ENCODE measurements at regions of chr7 and their contacts with region 1.

Region 1: GRCh38 chr7:81499262-81500116 is 270.4 kb downstream of the HGF start:
- ATAC-seq: peak; percentile 47 to 88 (median 72)
- H3K4me3 ChIP-seq: no peak overlapping the region
- H3K27ac ChIP-seq: no peak overlapping the region
- H3K4me1 ChIP-seq: peaks cover 0 to 2% of the 10 kb centered on the region in 2 donors

Region 2: GRCh38 chr7:81715984-81716588 is 216.6 kb after region 1 on chr7:
- in situ Hi-C with region 1: loop called in 2 of 9 experiments (anchors 25 kb)
- ATAC-seq: peak in 5 of 8 experiments; percentile 36 to 79 (median 67)
- H3K4me3 ChIP-seq: no peak overlapping the region
- H3K27ac ChIP-seq: no peak overlapping the region
- H3K4me1 ChIP-seq: no peaks in the 10 kb centered on the region

Region 3: DNA sequence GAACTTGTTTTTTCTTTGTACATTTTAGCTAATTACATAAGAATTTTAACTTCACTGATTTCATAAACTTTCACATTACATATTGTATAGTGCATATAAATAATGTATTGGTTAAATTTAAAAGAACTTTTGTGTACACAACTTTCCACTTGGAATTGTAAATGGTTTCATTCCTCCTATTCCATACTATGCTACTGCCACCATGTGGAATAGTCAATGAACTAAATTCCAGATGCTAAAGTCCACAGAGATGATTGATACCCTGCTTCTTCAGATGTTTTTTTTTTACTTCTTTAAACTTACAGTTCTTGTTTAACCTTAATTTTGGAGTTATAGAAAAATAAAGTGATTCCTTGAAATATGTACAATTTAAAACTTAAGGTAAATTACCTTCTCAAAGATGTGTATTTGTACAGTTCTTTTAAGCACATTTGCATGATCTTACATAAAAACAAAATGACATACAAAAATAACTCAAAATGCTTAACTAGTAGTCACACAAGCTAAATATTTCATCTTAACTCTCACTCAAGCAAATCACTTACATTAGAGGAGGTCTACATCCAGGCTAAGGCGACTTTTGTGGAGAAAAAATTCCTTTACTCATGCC is 518.0 kb after region 1 on chr7:
- in situ Hi-C with region 1: loop called in 3 of 9 experiments (anchors 10 to 25 kb)
- ATAC-seq: peak in 3 of 8 experiments; percentile 59 to 74 (median 60)
- H3K4me3 ChIP-seq: no peak overlapping the region
- H3K27ac ChIP-seq: no peak overlapping the region
- H3K4me1 ChIP-seq: no peaks in the 10 kb centered on the region

Region 4: GRCh38 chr7:82204694-82205093 is 705.2 kb after region 1 on chr7:
- in situ Hi-C with region 1: loop called in 1 of 9 experiments (anchors 25 kb)
- ATAC-seq: peak in 5 of 8 experiments; percentile 5 to 97 (median 61)
- H3K4me3 ChIP-seq: no peak overlapping the region
- H3K27ac ChIP-seq: no peak overlapping the region
- H3K4me1 ChIP-seq: peaks cover 9 to 24% of the 10 kb centered on the region in 2 donors

Region 5: GRCh38 chr7:82740246-82740848 is 1240.9 kb after region 1 on chr7:
- in situ Hi-C with region 1: loop called in 7 of 9 experiments (anchors 25 kb)
- ATAC-seq: peak in 3 of 8 experiments; percentile 74 to 76 (median 74)
- H3K4me3 ChIP-seq: no peak overlapping the region
- H3K27ac ChIP-seq: no peak overlapping the region
- H3K4me1 ChIP-seq: no peaks in the 10 kb centered on the region